G401 (cell line): ENCODE measurements at regions of chr4 and their contacts with region 1.

Region 1: DNA sequence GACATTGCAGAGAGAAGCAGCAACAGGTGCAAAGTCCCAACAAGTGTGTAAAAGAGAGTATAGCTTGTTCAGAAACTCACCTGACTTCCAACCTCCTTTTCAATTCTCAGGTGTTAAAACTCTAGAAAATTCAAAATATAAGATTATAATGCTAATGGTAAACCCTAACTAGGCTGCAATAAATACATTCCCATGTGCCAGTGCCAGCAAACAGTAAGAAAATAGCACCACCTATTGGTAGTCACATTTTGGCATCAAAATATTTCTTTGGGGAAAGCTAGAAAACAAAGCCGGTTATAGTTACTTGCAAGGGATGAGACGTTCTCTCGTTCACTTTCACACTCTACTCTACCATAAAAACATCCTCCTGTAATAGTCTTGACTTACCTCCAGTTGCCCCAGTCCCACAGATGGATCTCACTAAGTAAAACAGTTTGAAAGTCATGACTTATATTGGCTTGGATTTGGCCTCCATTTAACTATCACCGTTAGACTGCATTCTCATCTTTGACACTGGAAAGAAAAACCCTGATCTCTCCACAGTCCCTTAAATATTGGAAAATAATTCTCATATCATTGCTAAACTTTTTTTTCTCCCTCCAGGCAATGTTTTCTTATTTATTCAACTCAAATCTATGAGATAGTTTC is 9.6 kb downstream of the BMP3 start:
- DNase-seq: peak; percentile 41

Region 2: GRCh38 chr4:80365928-80366327 is 674.2 kb before region 1 on chr4:
- in situ Hi-C with region 1: loop called (anchors 25 kb)
- DNase-seq: peak; percentile 75